K562 (cell line): ENCODE measurements at regions of chr22 and their contacts with region 1.

Region 1: DNA sequence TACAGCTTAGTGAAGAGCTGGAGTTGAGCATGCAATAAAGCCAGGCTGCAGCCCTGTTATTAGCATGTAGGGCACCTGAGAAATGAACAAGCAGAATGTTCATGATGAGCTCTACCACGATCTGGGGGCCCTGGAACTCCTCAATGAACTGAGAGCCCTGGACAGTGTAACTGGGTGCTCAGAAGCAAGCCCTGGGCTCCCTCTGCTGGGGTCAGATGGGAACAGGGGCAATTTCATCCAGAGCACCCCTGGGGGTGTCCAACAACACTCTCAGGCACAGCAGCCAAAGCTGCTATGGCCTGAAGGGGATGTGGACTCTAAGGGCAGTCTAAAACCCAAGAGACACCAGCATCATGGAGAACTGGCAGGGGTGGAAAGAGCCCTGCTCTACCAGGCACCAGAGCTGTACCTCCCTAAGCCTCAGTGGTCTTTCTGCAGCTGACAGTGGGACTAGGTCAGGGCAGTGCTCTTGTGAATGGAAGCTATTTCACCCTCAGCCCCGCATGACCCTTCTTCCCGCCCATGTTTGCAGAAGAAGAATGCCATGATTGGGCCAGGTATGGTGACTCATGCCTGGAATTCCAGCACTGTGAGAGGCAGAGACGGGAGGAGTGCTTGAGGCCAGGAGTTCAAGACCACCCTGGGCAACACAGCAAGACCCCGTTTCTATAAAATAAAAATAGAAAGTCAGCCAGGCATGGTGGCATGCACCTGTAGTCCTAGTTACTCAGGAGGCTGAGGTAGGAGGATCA is 28.9 kb downstream of the THOC5 start:
- DNase-seq: peak in 3 of 4 experiments; percentile 26 to 51 (median 46)
- ATAC-seq: peak; percentile 93
- H3K4me3 ChIP-seq: no peak overlapping the region
- H3K27ac ChIP-seq: no peak overlapping the region
- H3K4me1 ChIP-seq: peaks cover 0 to 10% of the 10 kb centered on the region in 2 experiments; a peak in 3 of 5 replicates
- H3K27me3 ChIP-seq: no peaks in the 10 kb centered on the region
- CTCF ChIP-seq: peak; percentile 62 to 67 (median 64)
- EP300 ChIP-seq: no peak
- POLR2A ChIP-seq: no peak
- RAD21 ChIP-seq: peak; percentile 42 to 59

Region 2: GRCh38 chr22:29394931-29395581 is 129.6 kb before region 1 on chr22:
- CTCF ChIA-PET with region 1: no interaction called
- POLR2A ChIA-PET with region 1: no interaction called
- in situ Hi-C with region 1: loop called (anchors 10 kb)
- intact Hi-C with region 1: loop called (anchors 2 kb)
- DNase-seq: peak; percentile 47 to 78 (median 60)
- ATAC-seq: peak; percentile 96
- H3K4me3 ChIP-seq: no peak overlapping the region
- H3K27ac ChIP-seq: no peak overlapping the region
- H3K4me1 ChIP-seq: peaks cover 0 to 2% of the 10 kb centered on the region in 2 experiments; a peak in 1 of 5 replicates
- H3K27me3 ChIP-seq: no peaks in the 10 kb centered on the region
- CTCF ChIP-seq: peak; percentile 83 to 95 (median 91)
- EP300 ChIP-seq: no peak
- POLR2A ChIP-seq: no peak
- RAD21 ChIP-seq: peak; percentile 73 to 86

Region 3: GRCh38 chr22:29480512-29481264 is 43.9 kb before region 1 on chr22:
- CTCF ChIA-PET with region 1: interaction called, 4 read pairs
- POLR2A ChIA-PET with region 1: interaction called, 3 read pairs
- in situ Hi-C with region 1: no loop called
- intact Hi-C with region 1: loop called (anchors 2 kb)
- DNase-seq: peak; percentile 78 to 90 (median 82)
- ATAC-seq: peak; percentile 86
- H3K4me3 ChIP-seq: peak overlapping the region; percentile 48
- H3K27ac ChIP-seq: peak overlapping the region; percentile 68
- H3K4me1 ChIP-seq: peaks cover 21 to 48% of the 10 kb centered on the region in 2 experiments; a peak in 4 of 5 replicates
- H3K27me3 ChIP-seq: no peaks in the 10 kb centered on the region
- CTCF ChIP-seq: peak; percentile 65 to 73 (median 69)
- EP300 ChIP-seq: no peak
- POLR2A ChIP-seq: no peak
- RAD21 ChIP-seq: peak; percentile 27 to 72; a peak in 3 of 4 replicates